ENCODE measurements at regions of chr10 and their contacts with region 1.

Region 1: DNA sequence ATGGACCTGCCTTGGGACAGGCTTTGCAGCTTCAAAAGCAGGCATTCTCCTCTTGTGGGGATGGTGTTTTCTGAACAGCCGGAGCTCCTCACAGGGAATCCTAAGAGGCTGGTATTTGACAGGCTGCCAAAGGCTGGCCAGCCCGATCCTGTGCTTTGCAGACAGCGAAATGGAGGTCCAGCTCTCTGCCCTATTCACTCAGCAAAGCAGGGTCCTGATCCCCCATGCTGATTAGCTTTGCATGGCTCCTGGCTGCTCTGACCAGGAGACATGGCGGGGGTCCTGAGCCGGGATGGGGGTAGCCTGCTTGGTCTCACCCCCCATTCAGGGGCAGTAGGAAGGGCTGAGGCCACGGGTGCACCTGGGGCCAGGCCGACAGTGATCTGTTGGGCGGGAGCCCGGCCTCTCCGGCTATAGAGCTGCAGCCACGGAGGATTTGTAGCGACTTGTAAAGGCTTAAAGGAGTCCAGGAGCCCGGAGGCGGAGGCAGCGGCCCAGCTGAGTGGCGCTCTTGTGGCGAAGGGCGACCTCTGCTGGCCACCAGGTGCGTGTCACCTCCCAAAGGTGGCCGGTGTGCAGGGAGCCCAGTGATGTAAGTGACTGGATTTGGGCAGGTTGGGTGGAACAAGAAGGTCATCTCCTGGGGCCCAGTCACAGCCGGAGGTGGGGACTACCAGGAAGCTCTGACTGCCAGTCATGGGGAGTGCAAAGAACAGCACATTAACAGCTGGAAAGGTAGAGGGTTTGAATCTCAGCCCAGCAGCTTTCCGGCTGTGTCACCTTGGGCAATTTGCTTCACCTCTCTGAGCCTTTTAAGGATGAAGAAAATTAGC is 126.5 kb downstream of the ZMIZ1 start:
- H3K4me3 ChIP-seq: no peak overlapping the region
- H3K27ac ChIP-seq: no peak overlapping the region
- H3K4me1 ChIP-seq: no peaks in the 10 kb centered on the region
- CTCF ChIP-seq: peak; percentile 94

Region 2: GRCh38 chr10:78047314-78047891 is 1147.9 kb before region 1 on chr10:
- CTCF ChIA-PET with region 1: interaction called, 27 read pairs
- POLR2A ChIA-PET with region 1: no interaction called
- H3K4me3 ChIP-seq: no peak overlapping the region
- H3K27ac ChIP-seq: no peak overlapping the region
- H3K4me1 ChIP-seq: no peaks in the 10 kb centered on the region
- CTCF ChIP-seq: peak; percentile 92

Region 3: DNA sequence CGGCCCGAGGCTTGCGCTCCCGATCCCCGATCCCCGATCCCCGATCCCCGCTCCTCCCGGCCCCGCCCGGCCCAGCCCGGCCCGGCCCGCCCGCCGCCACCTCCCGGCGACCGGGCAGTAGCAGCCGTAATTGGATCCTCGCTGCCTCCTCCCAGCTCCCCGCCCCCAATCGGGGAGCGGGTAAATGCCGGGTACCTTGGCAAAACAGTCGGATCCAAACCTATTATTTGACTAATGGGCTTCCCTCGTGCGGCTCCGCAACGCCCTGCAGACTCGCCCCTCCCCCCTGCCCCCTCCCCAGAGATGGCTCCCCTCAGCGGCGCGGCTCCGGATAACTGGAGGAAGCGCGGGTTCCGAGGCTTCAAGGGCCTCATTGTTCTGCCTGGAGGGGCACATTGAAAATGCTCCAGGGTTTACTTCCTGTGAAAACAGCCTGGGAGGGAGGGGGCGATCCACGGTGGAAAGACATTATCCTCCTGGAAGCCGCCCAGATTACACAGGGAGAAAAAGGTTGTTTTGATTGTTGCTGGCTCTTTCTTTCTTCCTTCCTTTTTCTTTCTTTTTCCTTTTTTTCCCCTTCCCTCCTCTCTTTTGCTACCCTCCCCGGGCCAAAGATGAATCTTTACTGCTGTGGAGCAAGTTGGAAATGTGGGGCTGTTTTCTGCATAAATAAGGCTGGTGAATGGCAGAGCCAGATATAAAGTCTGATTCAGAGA is 221.2 kb before region 1 on chr10:
- CTCF ChIA-PET with region 1: interaction called, 13 read pairs
- POLR2A ChIA-PET with region 1: interaction called, 3 read pairs
- H3K4me3 ChIP-seq: peak overlapping the region; percentile 36
- H3K27ac ChIP-seq: peak overlapping the region; percentile 92
- H3K4me1 ChIP-seq: peaks cover 11% of the 10 kb centered on the region
- CTCF ChIP-seq: peak; percentile 21; the same call in 1 of the 2 replicates

Region 4: GRCh38 chr10:79073784-79074432 is 121.4 kb before region 1 on chr10:
- CTCF ChIA-PET with region 1: interaction called, 19 read pairs
- POLR2A ChIA-PET with region 1: no interaction called
- H3K4me3 ChIP-seq: no peak overlapping the region
- H3K27ac ChIP-seq: no peak overlapping the region
- H3K4me1 ChIP-seq: peaks cover 7% of the 10 kb centered on the region
- CTCF ChIP-seq: no peak

Region 5: GRCh38 chr10:79159141-79159651 is 36.1 kb before region 1 on chr10:
- CTCF ChIA-PET with region 1: interaction called, 15 read pairs
- POLR2A ChIA-PET with region 1: interaction called, 5 read pairs
- H3K4me3 ChIP-seq: no peak overlapping the region
- H3K27ac ChIP-seq: no peak overlapping the region
- H3K4me1 ChIP-seq: peaks cover 3% of the 10 kb centered on the region
- CTCF ChIP-seq: no peak

Region 6: DNA sequence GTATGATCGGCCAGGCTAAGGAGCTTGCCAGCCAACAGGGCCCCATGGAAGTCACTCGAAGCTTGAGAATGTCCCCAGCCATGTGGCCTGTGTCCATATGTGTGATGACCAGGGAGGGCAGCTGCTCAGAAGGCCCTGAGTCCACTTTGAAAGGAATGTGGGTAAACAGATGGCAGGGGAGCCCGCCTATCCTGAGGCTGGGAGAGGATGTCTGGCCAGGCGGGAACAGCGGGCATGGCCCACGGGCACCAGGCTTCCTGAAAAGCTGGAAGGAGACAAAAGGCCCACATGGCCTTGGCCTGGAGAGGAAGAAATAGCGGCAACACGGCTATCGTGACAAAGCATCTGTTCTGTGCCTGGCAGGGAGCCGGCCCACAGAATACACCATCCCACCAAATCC is 14.0 kb after region 1 on chr10:
- CTCF ChIA-PET with region 1: interaction called, 11 read pairs
- POLR2A ChIA-PET with region 1: no interaction called
- H3K4me3 ChIP-seq: no peak overlapping the region
- H3K27ac ChIP-seq: no peak overlapping the region
- H3K4me1 ChIP-seq: no peaks in the 10 kb centered on the region
- CTCF ChIP-seq: no peak

Region 7: DNA sequence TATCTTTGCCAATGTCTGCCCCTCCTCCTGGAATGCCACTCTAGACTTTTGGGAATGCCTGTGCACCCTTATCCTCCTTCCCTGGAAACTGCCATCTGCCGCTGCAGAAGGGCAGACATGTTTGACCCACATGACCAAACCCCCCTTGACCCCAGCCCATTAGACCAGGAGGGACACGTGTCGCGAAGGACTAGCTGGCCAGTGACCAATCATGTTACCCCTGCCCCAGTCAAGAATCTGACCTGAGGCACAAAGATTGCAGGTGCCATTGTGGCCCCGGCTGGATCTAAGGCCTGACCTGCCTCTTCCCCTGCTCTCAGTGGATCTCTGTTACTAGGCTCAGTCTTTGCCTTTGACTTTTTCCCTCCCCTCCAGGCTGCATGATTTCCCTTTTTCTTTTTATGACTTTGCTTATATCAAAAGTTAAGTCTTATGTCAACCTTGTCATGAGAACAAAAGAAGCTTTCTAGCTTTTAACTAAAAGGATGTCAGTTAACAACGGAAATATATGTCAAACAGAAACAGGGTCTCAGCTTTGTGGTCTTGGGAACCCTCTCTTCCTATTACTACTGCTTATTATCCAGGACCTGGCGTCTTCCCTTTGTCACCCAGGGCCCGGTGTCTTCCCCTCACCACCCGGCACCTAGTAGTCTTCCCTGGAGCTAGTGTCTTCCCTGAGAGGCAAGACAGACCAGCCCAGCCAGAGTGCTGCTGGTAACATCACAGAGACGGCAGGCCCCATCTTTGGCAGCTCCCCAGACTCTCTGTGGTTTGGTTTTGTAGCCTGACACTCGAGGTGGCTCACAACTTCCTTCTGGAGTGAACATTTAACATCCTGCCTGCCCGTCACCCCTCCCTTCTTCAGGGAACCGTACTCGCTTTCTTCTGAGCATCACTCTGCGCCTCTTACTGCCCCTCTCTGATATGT is 127.6 kb after region 1 on chr10:
- CTCF ChIA-PET with region 1: no interaction called
- POLR2A ChIA-PET with region 1: no interaction called
- H3K4me3 ChIP-seq: no peak overlapping the region
- H3K27ac ChIP-seq: no peak overlapping the region
- H3K4me1 ChIP-seq: no peaks in the 10 kb centered on the region
- CTCF ChIP-seq: no peak

Measured in HEK293 (cell line).